K562 (cell line): ENCODE measurements at regions of chr2 and their contacts with region 1.

Region 1: GRCh38 chr2:64644177-64645004 is 9.3 kb downstream of the SERTAD2 start:
- DNase-seq: peak; percentile 75 to 95 (median 84)
- ATAC-seq: peak; percentile 83
- H3K4me3 ChIP-seq: peak overlapping the region; percentile 38
- H3K27ac ChIP-seq: peak overlapping the region; percentile 96
- H3K4me1 ChIP-seq: peaks cover 36 to 65% of the 10 kb centered on the region in 2 experiments
- H3K27me3 ChIP-seq: no peaks in the 10 kb centered on the region
- CTCF ChIP-seq: no peak
- EP300 ChIP-seq: peak; percentile 51; the same call in 1 of the 2 replicates
- POLR2A ChIP-seq: peak; percentile 94
- RAD21 ChIP-seq: no peak

Region 2: GRCh38 chr2:64400733-64401500 is 243.5 kb before region 1 on chr2:
- CTCF ChIA-PET with region 1: no interaction called
- POLR2A ChIA-PET with region 1: no interaction called
- in situ Hi-C with region 1: no loop called
- intact Hi-C with region 1: no loop called
- DNase-seq: no peak
- ATAC-seq: no peak
- H3K4me3 ChIP-seq: no peak overlapping the region
- H3K27ac ChIP-seq: no peak overlapping the region
- H3K4me1 ChIP-seq: peaks cover 0 to 22% of the 10 kb centered on the region in 2 experiments; a peak in 4 of 5 replicates
- H3K27me3 ChIP-seq: peaks cover 0 to 25% of the 10 kb centered on the region in 2 experiments; a peak in 2 of 5 replicates
- CTCF ChIP-seq: no peak
- EP300 ChIP-seq: no peak
- POLR2A ChIP-seq: no peak
- RAD21 ChIP-seq: no peak

Region 3: GRCh38 chr2:64609227-64609941 is 35.0 kb before region 1 on chr2:
- CTCF ChIA-PET with region 1: interaction called, 3 read pairs
- POLR2A ChIA-PET with region 1: interaction called, 11 read pairs
- in situ Hi-C with region 1: no loop called
- intact Hi-C with region 1: loop called (anchors 2 kb)
- DNase-seq: peak; percentile 82 to 94 (median 91)
- ATAC-seq: peak; percentile 85
- H3K4me3 ChIP-seq: peak overlapping the region; percentile 60
- H3K27ac ChIP-seq: peak overlapping the region; percentile 78
- H3K4me1 ChIP-seq: peaks cover 21 to 30% of the 10 kb centered on the region in 2 experiments; a peak in 4 of 5 replicates
- H3K27me3 ChIP-seq: no peaks in the 10 kb centered on the region
- CTCF ChIP-seq: peak in 2 of 3 experiments; percentile 55 to 69; a peak in 3 of 6 replicates
- EP300 ChIP-seq: 0 out of 2 replicates have a peak, but pooled peaks have one; percentile 5
- POLR2A ChIP-seq: peak; percentile 77
- RAD21 ChIP-seq: peak in 1 of 2 experiments; percentile 61; a peak in 3 of 4 replicates

Region 4: GRCh38 chr2:64767670-64768468 is 123.5 kb after region 1 on chr2:
- CTCF ChIA-PET with region 1: interaction called, 4 read pairs
- POLR2A ChIA-PET with region 1: interaction called, 3 read pairs
- in situ Hi-C with region 1: no loop called
- intact Hi-C with region 1: loop called (anchors 2 kb)
- DNase-seq: peak; percentile 76 to 91 (median 82)
- ATAC-seq: peak; percentile 90
- H3K4me3 ChIP-seq: peak overlapping the region; percentile 61
- H3K27ac ChIP-seq: peak overlapping the region; percentile 77
- H3K4me1 ChIP-seq: peaks cover 31 to 52% of the 10 kb centered on the region in 2 experiments
- H3K27me3 ChIP-seq: no peaks in the 10 kb centered on the region
- CTCF ChIP-seq: peak in 2 of 3 experiments; percentile 33 to 41; a peak in 4 of 6 replicates
- EP300 ChIP-seq: 0 out of 2 replicates have a peak, but pooled peaks have one; percentile 13
- POLR2A ChIP-seq: peak; percentile 77
- RAD21 ChIP-seq: peak in 1 of 2 experiments; percentile 54; a peak in 2 of 4 replicates

Region 5: DNA sequence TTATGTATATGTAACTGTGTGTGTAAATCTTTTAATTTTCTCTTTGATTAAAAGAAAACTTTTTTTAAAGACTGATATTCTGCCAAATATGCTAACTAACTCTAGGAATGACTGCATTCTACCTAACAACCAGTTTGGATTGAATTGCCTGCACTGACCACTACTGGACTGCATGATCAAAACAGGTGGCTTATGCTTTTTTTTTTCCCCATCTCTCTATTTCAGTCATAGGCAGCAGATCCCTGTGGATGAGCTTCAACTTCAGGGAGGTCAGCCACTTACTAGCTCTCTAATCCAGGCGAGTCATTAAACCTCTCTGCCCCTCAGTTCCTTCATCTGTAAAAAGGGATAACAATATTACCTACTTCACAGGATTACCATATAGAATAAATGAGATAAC is 147.9 kb after region 1 on chr2:
- CTCF ChIA-PET with region 1: interaction called, 5 read pairs
- POLR2A ChIA-PET with region 1: interaction called, 5 read pairs
- in situ Hi-C with region 1: no loop called
- intact Hi-C with region 1: loop called (anchors 1 kb)
- DNase-seq: peak in 2 of 4 experiments; percentile 19 to 30
- ATAC-seq: peak; percentile 77
- H3K4me3 ChIP-seq: no peak overlapping the region
- H3K27ac ChIP-seq: no peak overlapping the region
- H3K4me1 ChIP-seq: peaks cover 6 to 8% of the 10 kb centered on the region in 2 experiments; a peak in 2 of 5 replicates
- H3K27me3 ChIP-seq: peaks cover 0 to 11% of the 10 kb centered on the region in 2 experiments; a peak in 4 of 5 replicates
- CTCF ChIP-seq: peak; percentile 33 to 55 (median 34); a peak in 3 of 6 replicates
- EP300 ChIP-seq: no peak
- POLR2A ChIP-seq: no peak
- RAD21 ChIP-seq: peak in 1 of 2 experiments; percentile 47; a peak in 2 of 4 replicates

Region 6: DNA sequence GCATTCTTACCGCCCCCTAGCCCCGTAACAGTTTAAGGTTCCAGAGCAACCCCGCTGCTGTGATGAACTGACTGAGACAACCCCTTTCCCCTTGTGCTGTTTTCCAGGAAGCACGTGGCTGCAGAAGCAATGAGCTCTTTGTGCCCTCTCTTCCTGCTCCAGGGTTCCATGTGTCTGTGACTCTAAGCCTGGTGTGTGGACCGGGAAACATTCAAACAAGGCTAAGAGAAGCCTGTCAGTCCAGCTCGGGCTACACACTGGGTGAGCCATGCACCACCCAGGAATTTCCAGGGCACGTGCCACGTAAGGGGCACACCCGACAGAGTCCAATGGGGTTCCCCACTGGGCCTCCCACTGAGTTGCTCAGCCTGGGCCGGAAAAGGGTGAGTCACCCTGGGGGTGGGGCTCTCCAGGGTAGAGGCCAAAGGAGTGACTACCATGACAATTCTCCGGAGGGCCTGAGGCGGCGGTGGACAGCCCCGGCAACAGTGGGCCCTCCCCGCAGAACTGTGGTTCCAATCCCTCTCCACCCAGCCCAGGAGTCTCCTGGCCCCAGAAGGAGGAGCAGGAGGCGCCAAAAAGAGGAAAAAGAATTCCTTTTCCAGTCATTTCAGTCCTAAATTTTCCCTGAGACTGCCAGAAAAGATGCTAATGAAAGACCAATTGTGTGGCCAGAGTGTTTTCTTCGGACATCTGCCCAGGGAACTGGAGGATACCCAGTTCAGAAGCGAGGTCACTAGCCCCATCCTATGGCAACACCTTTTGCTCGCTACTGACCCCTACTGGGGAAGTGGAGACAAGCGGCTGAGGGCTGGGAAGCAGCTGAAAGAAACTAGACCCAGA is 187.0 kb after region 1 on chr2:
- CTCF ChIA-PET with region 1: no interaction called
- POLR2A ChIA-PET with region 1: no interaction called
- in situ Hi-C with region 1: no loop called
- intact Hi-C with region 1: loop called (anchors 1 kb)
- DNase-seq: peak; percentile 90 to 94 (median 92)
- ATAC-seq: peak; percentile 99
- H3K4me3 ChIP-seq: no peak overlapping the region
- H3K27ac ChIP-seq: peak overlapping the region; percentile 94
- H3K4me1 ChIP-seq: peaks cover 10 to 27% of the 10 kb centered on the region in 2 experiments
- H3K27me3 ChIP-seq: no peaks in the 10 kb centered on the region
- CTCF ChIP-seq: peak; percentile 91 to 98 (median 91)
- EP300 ChIP-seq: peak; percentile 29; the same call in 1 of the 2 replicates
- POLR2A ChIP-seq: 0 out of 2 replicates have a peak, but pooled peaks have one; percentile 52
- RAD21 ChIP-seq: peak; percentile 79 to 80

Region 7: GRCh38 chr2:64859312-64860212 is 215.2 kb after region 1 on chr2:
- CTCF ChIA-PET with region 1: interaction called, 3 read pairs
- POLR2A ChIA-PET with region 1: interaction called, 13 read pairs
- in situ Hi-C with region 1: loop called (anchors 5 kb)
- intact Hi-C with region 1: no loop called
- DNase-seq: peak; percentile 76 to 92 (median 91)
- ATAC-seq: peak; percentile 92
- H3K4me3 ChIP-seq: peak overlapping the region; percentile 29
- H3K27ac ChIP-seq: peak overlapping the region; percentile 67
- H3K4me1 ChIP-seq: peaks cover 28 to 33% of the 10 kb centered on the region in 2 experiments
- H3K27me3 ChIP-seq: no peaks in the 10 kb centered on the region
- CTCF ChIP-seq: peak in 2 of 3 experiments; percentile 9 to 22; a peak in 1 of 6 replicates
- EP300 ChIP-seq: no peak
- POLR2A ChIP-seq: peak; percentile 68; the same call in 1 of the 2 replicates
- RAD21 ChIP-seq: peak in 1 of 2 experiments; percentile 22; a peak in 2 of 4 replicates

Region 8: DNA sequence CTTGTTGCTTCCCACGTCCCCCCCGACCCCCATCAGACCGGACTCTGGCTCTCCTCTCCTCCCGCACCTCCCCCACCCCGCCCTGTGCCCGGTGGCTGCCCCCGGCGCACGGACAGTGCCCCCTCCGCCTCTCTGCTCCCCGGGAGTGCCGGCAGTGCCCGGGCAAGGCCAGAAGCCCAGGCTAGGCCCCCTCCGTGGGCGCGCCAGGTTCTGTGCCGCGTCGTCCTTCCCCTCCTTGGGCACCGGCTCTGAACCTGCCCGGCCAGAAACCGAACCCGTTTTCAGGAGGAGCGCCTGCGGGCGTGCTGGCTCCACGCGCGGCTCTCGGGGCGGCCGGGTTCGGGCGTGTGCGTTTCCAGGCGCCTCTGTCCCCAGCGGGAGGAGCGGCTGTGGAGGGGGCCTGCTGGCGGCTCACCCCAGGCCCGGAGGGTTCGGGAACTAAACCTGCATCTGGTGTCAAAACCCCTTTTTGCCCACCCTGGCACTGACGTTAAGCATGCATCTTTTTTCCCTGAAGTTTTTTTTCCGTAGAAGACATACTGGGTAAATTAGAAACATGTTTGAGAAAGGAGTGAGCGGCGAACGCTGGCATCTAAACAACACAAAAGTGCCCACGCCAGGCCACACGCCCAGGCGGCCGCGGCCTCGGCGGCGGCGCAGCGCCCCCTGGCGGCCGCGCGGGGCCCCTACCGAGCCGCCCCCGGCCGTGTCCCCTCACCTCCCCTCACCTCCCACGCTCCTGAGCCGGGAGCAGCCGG is 220.9 kb after region 1 on chr2:
- CTCF ChIA-PET with region 1: interaction called, 25 read pairs
- POLR2A ChIA-PET with region 1: interaction called, 13 read pairs
- in situ Hi-C with region 1: loop called (anchors 5 kb)
- intact Hi-C with region 1: loop called (anchors 1 kb)
- DNase-seq: peak; percentile 60 to 90 (median 86)
- ATAC-seq: peak; percentile 92
- H3K4me3 ChIP-seq: peak overlapping the region; percentile 14; the same call in 1 of the 2 replicates
- H3K27ac ChIP-seq: no peak overlapping the region
- H3K4me1 ChIP-seq: peaks cover 18 to 24% of the 10 kb centered on the region in 2 experiments
- H3K27me3 ChIP-seq: no peaks in the 10 kb centered on the region
- CTCF ChIP-seq: peak; percentile 56 to 66 (median 66); a peak in 5 of 6 replicates
- EP300 ChIP-seq: no peak
- POLR2A ChIP-seq: no peak
- RAD21 ChIP-seq: peak; percentile 78 to 97